Calu3 (cell line): ENCODE measurements at regions of chr1 and their contacts with region 1.

Region 1: DNA sequence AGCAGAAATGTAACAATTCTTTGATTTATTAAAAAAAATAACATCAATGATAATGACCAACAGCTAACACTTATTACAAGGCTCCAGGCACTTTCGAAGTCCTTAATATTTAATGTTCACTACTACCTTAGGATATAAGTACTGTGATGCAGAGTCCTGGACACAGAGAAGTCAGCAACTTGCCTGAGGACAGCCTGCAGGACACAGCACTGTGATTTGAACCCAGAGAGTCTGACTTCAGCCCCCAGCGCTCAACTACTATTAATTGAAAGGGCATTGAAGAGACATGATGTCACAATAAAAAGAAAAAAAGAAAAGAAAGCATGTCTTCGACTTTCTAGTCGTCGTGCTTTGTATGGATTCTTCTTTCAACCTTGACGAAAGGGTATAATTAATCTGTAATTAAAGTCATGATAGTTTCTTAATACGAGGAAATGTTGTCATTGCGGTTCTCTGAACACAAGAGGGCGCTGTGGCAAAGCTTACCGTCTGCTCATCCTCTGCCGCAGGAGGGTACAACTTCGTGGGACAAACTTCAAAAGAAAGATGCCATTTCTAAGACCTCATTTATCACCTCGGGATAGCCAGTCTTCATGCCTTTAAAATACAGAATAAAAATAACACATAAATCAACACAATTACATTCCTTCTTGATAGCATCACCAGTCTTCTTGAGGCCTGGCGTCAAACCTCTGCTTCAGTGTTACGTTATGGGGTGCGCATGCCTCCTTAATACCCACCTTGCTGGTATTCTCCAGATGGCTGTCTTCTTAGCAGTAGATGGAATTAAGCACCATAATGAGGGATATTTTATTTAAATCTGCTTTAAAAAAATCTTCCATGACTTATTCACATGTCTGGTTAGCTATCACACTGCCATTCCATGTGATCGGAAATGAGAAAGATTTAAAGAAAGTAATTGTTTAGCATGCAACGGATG is 240.1 kb downstream of the DISC1 start:
- DNase-seq: peak; percentile 64
- H3K4me3 Mint-ChIP-seq: no peak overlapping the region
- H3K27ac Mint-ChIP-seq: no peak overlapping the region
- H3K4me1 Mint-ChIP-seq: peaks cover under 1% of the 10 kb centered on the region
- H3K27me3 Mint-ChIP-seq: no peaks in the 10 kb centered on the region
- CTCF ChIP-seq: peak; percentile 88

Region 2: DNA sequence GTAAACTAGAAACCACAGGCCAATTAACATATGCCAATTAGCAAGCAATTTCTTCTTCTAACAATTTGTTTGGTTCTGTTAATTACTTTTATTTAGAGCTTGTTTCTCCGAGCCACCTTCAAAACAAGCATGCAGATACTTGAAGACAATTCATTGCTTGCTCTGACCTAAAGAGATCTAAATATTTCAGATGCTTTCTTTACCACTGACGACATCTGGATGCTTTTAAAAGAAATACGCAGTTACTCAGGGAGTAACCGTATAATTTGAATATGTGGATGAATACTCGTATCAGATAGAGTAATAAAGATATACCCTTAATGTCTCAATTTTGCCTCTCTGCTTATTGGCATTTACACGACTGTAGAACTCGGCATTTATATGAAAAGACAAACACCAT is 150.0 kb after region 1 on chr1:
- CTCF ChIA-PET with region 1: no interaction called
- intact Hi-C with region 1: loop called (anchors 2 kb)
- DNase-seq: no peak
- H3K4me3 Mint-ChIP-seq: no peak overlapping the region
- H3K27ac Mint-ChIP-seq: no peak overlapping the region
- H3K4me1 Mint-ChIP-seq: peaks cover 8% of the 10 kb centered on the region
- H3K27me3 Mint-ChIP-seq: no peaks in the 10 kb centered on the region
- CTCF ChIP-seq: no peak

Region 3: GRCh38 chr1:232250837-232251236 is 384.2 kb after region 1 on chr1:
- CTCF ChIA-PET with region 1: no interaction called
- intact Hi-C with region 1: loop called (anchors 10 kb)
- DNase-seq: no peak
- H3K4me3 Mint-ChIP-seq: no peak overlapping the region
- H3K27ac Mint-ChIP-seq: no peak overlapping the region
- H3K4me1 Mint-ChIP-seq: no peaks in the 10 kb centered on the region
- H3K27me3 Mint-ChIP-seq: no peaks in the 10 kb centered on the region
- CTCF ChIP-seq: no peak

Region 4: GRCh38 chr1:232767305-232768074 is 900.8 kb after region 1 on chr1:
- CTCF ChIA-PET with region 1: no interaction called
- intact Hi-C with region 1: no loop called
- DNase-seq: peak; percentile 66
- H3K4me3 Mint-ChIP-seq: no peak overlapping the region
- H3K27ac Mint-ChIP-seq: peak overlapping the region; percentile 52
- H3K4me1 Mint-ChIP-seq: peaks cover 19% of the 10 kb centered on the region
- H3K27me3 Mint-ChIP-seq: peaks cover under 1% of the 10 kb centered on the region
- CTCF ChIP-seq: no peak